CD4-positive, alpha-beta memory T cell (primary cell): ENCODE measurements at regions of chr1 and their contacts with region 1.

Region 1: DNA sequence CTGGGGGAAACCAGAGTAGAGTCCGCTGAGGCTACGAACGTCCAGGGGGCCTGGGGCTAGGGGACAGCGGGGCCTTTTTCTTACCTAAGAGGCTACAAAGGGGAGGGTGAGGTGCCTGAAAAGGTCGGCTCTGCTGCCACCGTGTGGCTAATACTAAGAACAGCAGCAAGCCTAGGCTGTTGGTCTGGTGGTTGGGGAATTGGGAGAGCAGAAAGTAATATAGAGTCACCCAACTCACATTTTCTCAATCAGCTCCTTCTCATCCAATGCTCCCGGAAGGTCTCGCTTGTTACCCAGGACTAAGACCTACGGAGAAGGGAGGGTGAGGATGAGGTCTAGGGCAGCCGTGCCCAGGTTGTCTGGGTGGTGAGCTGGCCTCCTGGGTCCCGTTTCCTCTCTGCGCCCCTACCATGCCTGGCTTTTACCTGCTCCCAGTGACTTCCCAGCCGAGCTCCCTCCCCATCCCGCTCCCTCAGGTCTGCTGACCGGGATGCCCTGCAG is 9.3 kb downstream of the ARL8A start:
- DNase-seq: peak; percentile 47 to 59 (median 58)
- H3K4me3 ChIP-seq: no peak overlapping the region
- H3K4me3 Mint-ChIP-seq: no peak overlapping the region
- H3K27ac ChIP-seq: no peak overlapping the region
- H3K27ac Mint-ChIP-seq: peak overlapping the region in 2 of 7 donors; percentile 14 to 70
- H3K4me1 ChIP-seq: peaks cover 7% of the 10 kb centered on the region
- H3K4me1 Mint-ChIP-seq: peaks cover 2 to 20% (median 4%) of the 10 kb centered on the region in 4 donors
- H3K27me3 ChIP-seq: no peaks in the 10 kb centered on the region
- H3K27me3 Mint-ChIP-seq: no peaks in the 10 kb centered on the region

Region 2: GRCh38 chr1:201999625-202000238 is 135.5 kb before region 1 on chr1:
- CTCF ChIA-PET with region 1: interaction called, 10 read pairs
- POLR2A ChIA-PET with region 1: no interaction called
- intact Hi-C with region 1: no loop called
- DNase-seq: peak in 4 of 5 donors; percentile 18 to 24 (median 22)
- H3K4me3 ChIP-seq: no peak overlapping the region
- H3K4me3 Mint-ChIP-seq: no peak overlapping the region
- H3K27ac ChIP-seq: no peak overlapping the region
- H3K27ac Mint-ChIP-seq: no peak overlapping the region
- H3K4me1 ChIP-seq: no peaks in the 10 kb centered on the region
- H3K4me1 Mint-ChIP-seq: no peaks in the 10 kb centered on the region
- H3K27me3 ChIP-seq: no peaks in the 10 kb centered on the region
- H3K27me3 Mint-ChIP-seq: no peaks in the 10 kb centered on the region

Region 3: GRCh38 chr1:202009326-202010179 is 125.7 kb before region 1 on chr1:
- CTCF ChIA-PET with region 1: interaction called, 24 read pairs
- POLR2A ChIA-PET with region 1: no interaction called
- intact Hi-C with region 1: loop called (anchors 1 kb)
- DNase-seq: peak; percentile 42 to 57 (median 43)
- H3K4me3 ChIP-seq: no peak overlapping the region
- H3K4me3 Mint-ChIP-seq: no peak overlapping the region
- H3K27ac ChIP-seq: no peak overlapping the region
- H3K27ac Mint-ChIP-seq: peak overlapping the region in 1 of 7 donors; percentile 7
- H3K4me1 ChIP-seq: no peaks in the 10 kb centered on the region
- H3K4me1 Mint-ChIP-seq: no peaks in the 10 kb centered on the region
- H3K27me3 ChIP-seq: no peaks in the 10 kb centered on the region
- H3K27me3 Mint-ChIP-seq: no peaks in the 10 kb centered on the region

Region 4: DNA sequence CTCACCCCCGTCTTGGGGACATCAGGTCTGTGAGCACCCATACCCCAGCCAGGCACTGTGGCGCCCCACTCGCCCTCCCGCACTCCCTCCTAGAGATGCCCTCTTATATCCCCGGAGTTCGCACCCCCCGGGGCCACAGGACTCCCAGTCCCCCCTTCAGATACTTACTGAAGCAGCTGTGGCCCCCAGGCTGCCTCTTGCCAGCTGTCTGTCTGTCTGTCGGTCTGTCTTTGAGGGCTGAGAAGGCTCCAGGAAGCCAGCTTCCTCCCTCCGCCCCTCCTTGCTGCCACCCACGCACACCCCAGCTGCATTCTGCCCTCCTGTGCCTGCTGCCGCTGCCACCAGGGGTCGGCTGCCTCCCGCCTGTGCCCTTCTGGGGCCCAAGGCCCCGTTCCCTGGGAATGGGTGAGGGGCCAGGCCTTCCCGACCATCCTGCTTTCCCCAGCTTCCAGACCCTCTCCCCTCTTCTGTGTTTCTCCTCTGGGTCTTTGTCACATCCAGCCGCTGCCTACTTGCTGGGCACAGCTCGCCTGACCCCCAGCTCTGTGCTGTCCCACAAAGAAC is 25.2 kb after region 1 on chr1 and contains the start of gene PTPN7:
- CTCF ChIA-PET with region 1: interaction called, 23 read pairs
- POLR2A ChIA-PET with region 1: interaction called, 4 read pairs
- intact Hi-C with region 1: no loop called
- DNase-seq: peak; percentile 73 to 87 (median 78)
- H3K4me3 ChIP-seq: peak within 1 kb of the TSS; percentile 89 to 93
- H3K4me3 Mint-ChIP-seq: peak within 1 kb of the TSS; percentile 92 to 98 (median 96)
- H3K27ac ChIP-seq: peak within 1 kb of the TSS; percentile 93
- H3K27ac Mint-ChIP-seq: peak within 1 kb of the TSS; percentile 94 to 99 (median 99)
- H3K4me1 ChIP-seq: peaks cover 91% of the 10 kb centered on the region
- H3K4me1 Mint-ChIP-seq: peaks cover 55 to 97% (median 75%) of the 10 kb centered on the region in 4 donors
- H3K27me3 ChIP-seq: no peaks in the 10 kb centered on the region
- H3K27me3 Mint-ChIP-seq: no peaks in the 10 kb centered on the region
- total RNA-seq, gene PTPN7: 67.6 to 68.4 TPM